ENCODE measurements at regions of chr14 and their contacts with region 1.

Region 1: DNA sequence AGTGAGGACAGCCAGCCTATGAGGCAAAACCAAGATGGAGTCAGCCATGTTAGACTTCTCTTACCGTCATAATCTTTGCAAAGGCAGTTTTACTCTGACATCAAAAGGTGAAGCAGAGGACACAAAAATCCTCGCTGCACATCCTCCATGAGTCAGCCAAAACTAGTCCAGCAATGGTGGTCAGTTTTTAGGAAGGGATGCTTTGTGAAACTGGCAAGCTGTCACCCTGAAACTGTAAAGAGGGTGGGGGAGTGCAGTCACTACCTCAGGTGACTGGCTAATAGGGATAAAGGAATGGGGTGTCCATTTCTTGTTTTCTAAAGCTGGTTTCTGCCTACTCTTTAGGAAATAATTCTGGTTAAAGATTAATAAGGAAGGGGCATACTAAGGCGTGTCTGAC is 5.4 kb upstream of the CIPC start:
- DNase-seq: no peak
- ATAC-seq: no peak

Region 2: GRCh38 chr14:77076113-77076631 is 16.5 kb before region 1 on chr14:
- intact Hi-C with region 1: loop called (anchors 2 kb)
- DNase-seq: peak; percentile 89
- ATAC-seq: peak; percentile 96

Measured in Right ventricle myocardium inferior (tissue), 1 donor.